ENCODE measurements at regions of chr15 and their contacts with region 1.

Region 1: GRCh38 chr15:66765478-66766281 is 63.6 kb downstream of the SMAD6 start:
- DNase-seq: peak; percentile 98
- ATAC-seq: peak; percentile 72
- H3K4me3 ChIP-seq: peak overlapping the region; percentile 28; the same call in 1 of the 2 replicates
- H3K27ac ChIP-seq: peak overlapping the region; percentile 83
- H3K4me1 ChIP-seq: peaks cover 77% of the 10 kb centered on the region
- H3K27me3 ChIP-seq: no peaks in the 10 kb centered on the region
- CTCF ChIP-seq: no peak

Region 2: DNA sequence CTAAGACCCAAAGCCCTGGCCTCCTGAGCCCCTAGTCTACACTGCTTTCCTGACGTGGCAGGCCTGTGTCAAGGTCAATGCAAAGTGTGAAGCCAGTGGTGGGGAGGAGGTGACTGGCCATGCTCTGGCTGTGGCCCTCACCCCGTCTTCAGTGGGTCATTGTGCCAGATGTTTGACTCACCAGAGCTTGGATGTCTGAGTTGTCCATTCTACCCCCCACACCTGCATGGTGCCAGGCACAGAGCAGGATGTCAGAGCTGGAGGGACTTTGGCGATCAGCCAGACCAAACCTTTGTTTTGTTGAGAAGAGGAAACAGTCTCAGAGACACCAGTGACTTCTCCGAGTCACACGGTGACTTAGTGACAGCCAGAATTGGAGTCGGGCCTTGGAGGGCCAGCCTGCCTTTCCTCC is 14.1 kb before region 1 on chr15:
- CTCF ChIA-PET with region 1: no interaction called
- POLR2A ChIA-PET with region 1: interaction called, 13 read pairs
- intact Hi-C with region 1: loop called (anchors 1 kb)
- DNase-seq: peak; percentile 85
- ATAC-seq: peak; percentile 72
- H3K4me3 ChIP-seq: no peak overlapping the region
- H3K27ac ChIP-seq: peak overlapping the region; percentile 48
- H3K4me1 ChIP-seq: peaks cover 57% of the 10 kb centered on the region
- H3K27me3 ChIP-seq: no peaks in the 10 kb centered on the region
- CTCF ChIP-seq: no peak

Region 3: DNA sequence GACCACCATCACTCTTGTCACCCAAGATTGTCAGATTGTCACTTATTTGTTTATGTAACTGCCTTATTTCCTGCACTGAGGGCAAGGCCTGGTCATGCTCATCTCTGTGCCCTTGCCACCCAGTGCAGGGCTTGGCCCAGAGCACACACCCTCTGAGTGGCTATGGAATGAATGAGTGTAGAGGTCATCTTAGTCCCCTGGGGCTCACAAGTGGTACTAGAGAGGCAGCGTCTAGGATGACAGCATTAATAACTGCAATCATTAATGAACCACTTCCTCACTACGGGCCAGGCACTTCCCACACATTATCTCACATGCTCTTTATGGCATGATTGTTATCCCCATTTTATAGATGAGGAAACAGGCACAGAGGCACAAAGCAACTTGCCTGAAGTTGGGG is 53.4 kb after region 1 on chr15:
- CTCF ChIA-PET with region 1: no interaction called
- POLR2A ChIA-PET with region 1: no interaction called
- intact Hi-C with region 1: no loop called
- DNase-seq: peak; percentile 17
- ATAC-seq: peak; percentile 68
- H3K4me3 ChIP-seq: no peak overlapping the region
- H3K27ac ChIP-seq: no peak overlapping the region
- H3K4me1 ChIP-seq: peaks cover 29% of the 10 kb centered on the region
- H3K27me3 ChIP-seq: no peaks in the 10 kb centered on the region
- CTCF ChIP-seq: no peak

Region 4: DNA sequence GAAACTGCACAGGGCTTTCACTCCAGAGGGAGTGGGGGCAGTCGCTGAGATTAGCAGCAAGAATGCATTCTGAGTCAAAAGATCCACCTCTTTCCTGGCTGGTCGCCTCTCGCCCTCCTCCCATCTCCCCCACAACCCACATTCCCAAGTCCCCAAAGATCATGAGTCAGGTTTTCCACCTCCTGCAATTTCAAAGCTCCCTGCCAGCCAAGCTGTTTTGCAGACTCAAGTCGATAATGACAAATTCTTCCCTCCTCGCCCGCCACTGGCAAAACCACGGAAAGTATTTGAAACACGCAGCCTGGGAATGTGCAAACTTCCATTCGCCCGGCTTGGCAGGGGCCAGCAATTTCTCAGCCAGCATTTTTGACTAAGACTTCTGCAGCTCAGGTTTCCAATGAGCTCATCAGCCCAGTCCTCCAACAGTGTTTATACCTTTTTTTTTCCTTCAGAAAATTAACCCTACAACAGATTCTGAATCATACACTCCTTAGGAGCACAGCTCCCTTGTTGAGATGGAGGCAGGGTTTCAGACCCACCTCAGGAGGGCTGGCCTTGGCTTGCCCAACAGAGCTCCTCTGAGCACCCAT is 117.7 kb after region 1 on chr15:
- CTCF ChIA-PET with region 1: no interaction called
- POLR2A ChIA-PET with region 1: no interaction called
- intact Hi-C with region 1: loop called (anchors 1 kb)
- DNase-seq: peak; percentile 99
- ATAC-seq: peak; percentile 84
- H3K4me3 ChIP-seq: no peak overlapping the region
- H3K27ac ChIP-seq: peak overlapping the region; percentile 71
- H3K4me1 ChIP-seq: peaks cover 38% of the 10 kb centered on the region
- H3K27me3 ChIP-seq: no peaks in the 10 kb centered on the region
- CTCF ChIP-seq: no peak

Measured in PC-3 (cell line).